MCF 10A (cell line): ENCODE measurements at regions of chr1 and their contacts with region 1.

Region 1: GRCh38 chr1:47725992-47726855 is 271.0 kb downstream of the TRABD2B start:
- DNase-seq: peak; percentile 76
- H3K4me3 Mint-ChIP-seq: peak overlapping the region; percentile 22
- H3K27ac Mint-ChIP-seq: no peak overlapping the region
- H3K4me1 Mint-ChIP-seq: peaks cover 9% of the 10 kb centered on the region
- H3K27me3 Mint-ChIP-seq: no peaks in the 10 kb centered on the region
- CTCF ChIP-seq: peak; percentile 75

Region 2: GRCh38 chr1:47432071-47433036 is 293.9 kb before region 1 on chr1:
- CTCF ChIA-PET with region 1: interaction called, 696 read pairs
- POLR2A ChIA-PET with region 1: interaction called, 13 read pairs
- intact Hi-C with region 1: loop called (anchors 1 kb)
- DNase-seq: peak; percentile 89
- H3K4me3 Mint-ChIP-seq: peak overlapping the region; percentile 48
- H3K27ac Mint-ChIP-seq: peak overlapping the region; percentile 14
- H3K4me1 Mint-ChIP-seq: peaks cover 37% of the 10 kb centered on the region
- H3K27me3 Mint-ChIP-seq: no peaks in the 10 kb centered on the region
- CTCF ChIP-seq: peak; percentile 87

Region 3: GRCh38 chr1:47569681-47570470 is 156.3 kb before region 1 on chr1:
- CTCF ChIA-PET with region 1: interaction called, 10 read pairs
- POLR2A ChIA-PET with region 1: no interaction called
- intact Hi-C with region 1: no loop called
- DNase-seq: peak; percentile 86
- H3K4me3 Mint-ChIP-seq: peak overlapping the region; percentile 58
- H3K27ac Mint-ChIP-seq: peak overlapping the region; percentile 92
- H3K4me1 Mint-ChIP-seq: peaks cover 11% of the 10 kb centered on the region
- H3K27me3 Mint-ChIP-seq: no peaks in the 10 kb centered on the region
- CTCF ChIP-seq: peak; percentile 33

Region 4: GRCh38 chr1:47703981-47704596 is 22.1 kb before region 1 on chr1:
- CTCF ChIA-PET with region 1: interaction called, 65 read pairs
- POLR2A ChIA-PET with region 1: no interaction called
- intact Hi-C with region 1: no loop called
- DNase-seq: peak; percentile 66
- H3K4me3 Mint-ChIP-seq: no peak overlapping the region
- H3K27ac Mint-ChIP-seq: no peak overlapping the region
- H3K4me1 Mint-ChIP-seq: no peaks in the 10 kb centered on the region
- H3K27me3 Mint-ChIP-seq: peaks cover 15% of the 10 kb centered on the region
- CTCF ChIP-seq: peak; percentile 21

Region 5: DNA sequence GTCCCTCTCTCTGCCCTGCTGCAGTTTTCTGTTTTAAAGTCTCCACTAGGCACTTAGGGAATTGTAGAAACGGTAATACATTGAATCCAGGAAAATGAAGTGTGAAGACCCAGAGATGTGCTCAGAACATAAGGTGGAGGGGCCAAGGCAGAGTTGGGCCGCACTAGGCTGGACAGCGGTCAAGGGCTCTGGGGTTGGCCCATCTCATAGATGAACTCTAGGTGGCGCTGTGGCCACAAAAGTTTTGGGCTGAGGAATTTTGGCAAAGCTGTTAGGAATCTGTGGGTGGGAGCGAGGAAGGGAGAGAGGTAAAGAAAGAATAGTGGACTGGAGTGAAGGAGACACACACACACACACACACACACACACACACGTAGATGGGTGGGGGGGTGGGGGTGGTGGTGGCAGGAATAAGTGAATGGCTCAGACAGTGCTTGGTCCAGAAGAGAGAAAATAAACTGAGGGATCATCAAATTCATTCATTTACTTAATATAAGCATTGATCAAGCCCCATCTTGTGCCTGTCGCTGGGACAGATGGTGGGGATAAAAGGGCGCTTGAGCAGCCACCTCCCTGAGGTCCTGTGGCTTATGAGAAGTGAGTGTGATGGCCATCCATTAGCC is 12.4 kb after region 1 on chr1:
- CTCF ChIA-PET with region 1: interaction called, 27 read pairs
- POLR2A ChIA-PET with region 1: no interaction called
- intact Hi-C with region 1: no loop called
- DNase-seq: peak; percentile 73
- H3K4me3 Mint-ChIP-seq: no peak overlapping the region
- H3K27ac Mint-ChIP-seq: no peak overlapping the region
- H3K4me1 Mint-ChIP-seq: no peaks in the 10 kb centered on the region
- H3K27me3 Mint-ChIP-seq: peaks cover 25% of the 10 kb centered on the region
- CTCF ChIP-seq: peak; percentile 77